ENCODE measurements at regions of chr6 and their contacts with region 1.

Region 1: DNA sequence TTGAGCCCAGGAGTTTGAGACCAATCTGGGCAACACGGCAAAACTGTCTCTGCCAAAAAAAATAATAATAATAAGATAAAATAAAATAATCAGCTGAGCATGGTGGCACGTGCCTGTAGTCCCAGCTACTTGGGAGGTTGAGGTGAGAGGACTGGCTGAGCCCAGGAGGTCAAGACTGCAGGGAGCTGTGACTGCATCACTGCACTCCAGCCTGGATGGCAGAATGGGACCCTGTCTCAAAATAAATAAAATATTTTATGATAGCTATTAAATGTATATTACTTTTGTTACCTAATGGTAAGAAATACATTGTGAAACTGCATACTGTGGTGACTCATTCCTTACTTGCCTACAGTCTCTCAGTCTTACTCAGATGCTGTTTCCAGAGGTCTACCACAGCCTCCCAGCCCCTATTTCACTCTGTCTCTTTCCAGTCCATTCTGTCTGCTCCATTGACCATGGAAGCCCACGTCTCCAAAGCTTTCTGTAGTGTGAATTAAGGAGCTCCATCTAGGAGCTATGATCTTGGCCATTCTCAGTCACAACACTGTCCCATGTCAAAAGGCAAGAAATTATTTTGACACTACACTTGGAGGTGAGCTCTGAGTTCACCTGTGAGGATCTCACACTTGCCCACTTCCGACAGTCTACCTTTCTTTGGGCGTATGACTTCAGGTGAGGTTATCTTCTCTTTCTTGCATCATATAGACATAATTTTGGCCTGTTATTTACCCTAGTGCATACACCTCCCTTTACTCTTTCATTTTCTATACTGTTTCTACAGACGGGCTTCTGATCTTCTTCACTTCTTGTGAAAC is 22.4 kb upstream of the SNX9 start:
- DNase-seq: peak in 1 of 14 experiments; percentile 23
- ATAC-seq: peak; percentile 60
- H3K4me3 ChIP-seq: no peak overlapping the region
- H3K4me3 Mint-ChIP-seq: no peak overlapping the region
- H3K27ac ChIP-seq: no peak overlapping the region
- H3K27ac Mint-ChIP-seq: no peak overlapping the region
- H3K4me1 ChIP-seq: no peaks in the 10 kb centered on the region
- H3K4me1 Mint-ChIP-seq: peaks cover 7% of the 10 kb centered on the region
- H3K27me3 ChIP-seq: no peaks in the 10 kb centered on the region
- H3K27me3 Mint-ChIP-seq: peaks cover 4% of the 10 kb centered on the region
- CTCF ChIP-seq: no peak

Region 2: GRCh38 chr6:157774153-157775135 is 26.2 kb before region 1 on chr6:
- CTCF ChIA-PET with region 1: no interaction called
- POLR2A ChIA-PET with region 1: no interaction called
- intact Hi-C with region 1: loop called in 1 of 2 experiments (anchors 5 kb)
- DNase-seq: peak in 3 of 14 experiments; percentile 31 to 49 (median 42)
- ATAC-seq: no peak
- H3K4me3 ChIP-seq: no peak overlapping the region
- H3K4me3 Mint-ChIP-seq: peak overlapping the region; percentile 15
- H3K27ac ChIP-seq: no peak overlapping the region
- H3K27ac Mint-ChIP-seq: no peak overlapping the region
- H3K4me1 ChIP-seq: peaks cover 7% of the 10 kb centered on the region
- H3K4me1 Mint-ChIP-seq: peaks cover 13% of the 10 kb centered on the region
- H3K27me3 ChIP-seq: no peaks in the 10 kb centered on the region
- H3K27me3 Mint-ChIP-seq: no peaks in the 10 kb centered on the region
- CTCF ChIP-seq: no peak

Region 3: DNA sequence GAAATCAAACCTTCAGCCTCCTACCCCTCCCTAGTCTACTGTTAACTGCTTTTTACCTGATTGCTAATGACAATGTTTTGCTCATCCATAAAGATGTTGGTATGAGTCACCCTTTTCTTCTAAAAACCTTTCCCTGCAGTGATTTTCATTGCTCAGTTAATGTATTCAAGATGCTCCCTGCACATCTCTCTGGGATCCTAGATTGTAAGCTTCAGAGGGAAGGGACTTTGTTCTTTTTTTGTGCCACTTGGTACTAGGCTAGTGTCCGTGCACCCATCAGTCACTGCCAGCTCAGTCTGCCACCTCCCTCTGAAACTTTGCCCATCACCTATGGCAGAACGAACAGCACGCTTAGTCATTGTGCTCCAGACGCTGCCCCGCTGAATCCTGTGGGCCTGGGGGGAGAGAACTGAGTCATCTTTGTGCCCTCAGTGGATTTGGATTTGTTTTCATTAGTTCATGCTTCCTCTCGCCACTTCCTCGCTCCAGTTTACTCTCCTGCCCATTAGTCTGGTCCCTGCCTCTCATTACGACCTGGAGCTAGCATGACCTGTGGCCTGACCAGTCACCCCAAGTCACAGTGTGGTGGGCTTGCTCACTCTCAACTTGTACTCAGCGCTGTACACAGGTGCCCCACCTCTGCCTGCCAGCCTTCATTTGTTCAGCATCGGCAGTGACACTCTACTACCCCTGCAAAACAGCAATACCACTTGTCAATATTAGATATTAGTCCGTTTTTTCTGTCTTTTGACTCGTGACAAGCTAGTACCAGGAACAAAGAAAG is 681.3 kb after region 1 on chr6:
- CTCF ChIA-PET with region 1: no interaction called
- POLR2A ChIA-PET with region 1: no interaction called
- intact Hi-C with region 1: loop called in 1 of 2 experiments (anchors 5 kb)
- DNase-seq: no peak
- ATAC-seq: no peak
- H3K4me3 ChIP-seq: no peak overlapping the region
- H3K4me3 Mint-ChIP-seq: no peak overlapping the region
- H3K27ac ChIP-seq: no peak overlapping the region
- H3K27ac Mint-ChIP-seq: no peak overlapping the region
- H3K4me1 ChIP-seq: no peaks in the 10 kb centered on the region
- H3K4me1 Mint-ChIP-seq: no peaks in the 10 kb centered on the region
- H3K27me3 ChIP-seq: no peaks in the 10 kb centered on the region
- H3K27me3 Mint-ChIP-seq: no peaks in the 10 kb centered on the region
- CTCF ChIP-seq: no peak